ENCODE measurements at regions of chr2 and their contacts with region 1.

Region 1: DNA sequence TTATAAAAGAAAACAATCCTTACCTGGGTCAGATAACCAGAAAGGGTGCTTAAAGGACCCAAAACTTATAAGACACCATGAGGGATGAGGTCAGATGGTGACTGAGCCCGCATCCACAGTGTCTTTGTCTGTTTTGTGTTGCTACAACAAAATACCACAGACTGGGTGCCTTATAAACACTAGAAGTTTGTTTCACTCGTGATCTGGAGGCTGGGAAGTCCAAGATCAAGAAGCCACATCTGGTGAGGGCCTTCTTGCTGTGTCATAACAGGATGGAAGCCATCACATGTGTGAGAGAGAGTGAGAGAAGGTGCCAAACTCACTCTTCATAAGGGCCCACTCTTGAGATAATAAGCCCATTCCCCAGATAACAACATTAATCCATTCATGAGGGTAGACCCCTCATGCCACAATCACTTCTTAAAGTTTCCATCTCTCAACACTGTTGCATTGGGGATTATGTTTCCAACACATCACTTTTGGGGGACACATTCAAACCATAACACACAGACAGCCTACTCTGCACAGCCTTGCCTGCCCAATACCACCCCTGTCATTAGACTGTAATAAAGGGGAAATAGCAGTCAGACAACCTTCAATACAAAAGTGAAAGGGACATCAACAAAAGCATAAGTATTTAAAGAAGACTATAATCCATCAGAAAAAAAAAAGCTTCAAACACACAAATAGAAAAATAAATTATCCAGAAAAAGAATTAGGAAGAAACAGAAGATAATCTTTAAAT is 249.8 kb downstream of the ANAPC1 start:
- DNase-seq: peak; percentile 80
- H3K4me3 Mint-ChIP-seq: peak overlapping the region; percentile 62
- H3K27ac Mint-ChIP-seq: peak overlapping the region; percentile 88
- H3K4me1 Mint-ChIP-seq: peaks cover 27% of the 10 kb centered on the region
- H3K27me3 Mint-ChIP-seq: peaks cover 11% of the 10 kb centered on the region

Region 2: DNA sequence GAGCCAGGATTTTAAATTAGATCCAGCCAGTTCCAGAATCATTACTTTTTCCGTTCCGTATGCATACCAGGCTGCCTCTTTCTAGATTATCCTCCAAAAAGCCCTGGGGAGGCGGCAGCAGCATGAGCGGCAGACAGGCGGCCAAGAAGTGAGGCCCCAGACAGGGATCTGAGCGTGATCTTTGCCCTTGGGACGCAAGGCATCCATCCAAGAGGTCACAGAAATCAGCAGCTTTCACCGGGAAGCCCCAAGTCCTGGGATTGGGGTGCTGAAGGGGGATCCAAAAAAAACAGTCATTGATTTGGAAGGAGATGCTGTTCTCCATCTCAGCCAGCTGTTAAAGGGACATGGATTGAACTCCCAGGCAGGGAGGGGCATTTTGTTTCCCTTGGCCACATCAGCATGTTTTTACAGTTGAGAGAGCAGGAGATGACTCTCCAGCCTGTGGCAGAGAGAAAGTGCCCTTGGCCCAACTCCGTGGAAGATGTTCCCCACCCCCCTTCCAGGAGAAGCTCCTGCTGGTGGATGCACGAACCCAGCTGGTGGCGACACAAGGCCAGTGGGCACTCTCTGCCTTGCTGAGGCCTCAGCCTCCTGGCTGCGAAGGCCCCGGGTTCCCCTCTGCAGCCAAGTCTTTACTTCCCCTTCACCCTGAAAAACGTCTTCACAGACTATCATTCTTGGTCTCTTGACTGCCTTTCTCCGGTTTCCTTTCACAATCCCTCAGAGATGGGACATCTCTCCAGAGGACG is 15.8 kb before region 1 on chr2:
- intact Hi-C with region 1: no loop called
- DNase-seq: no peak
- H3K4me3 Mint-ChIP-seq: no peak overlapping the region
- H3K27ac Mint-ChIP-seq: no peak overlapping the region
- H3K4me1 Mint-ChIP-seq: peaks cover 8% of the 10 kb centered on the region
- H3K27me3 Mint-ChIP-seq: peaks cover 11% of the 10 kb centered on the region

Region 3: GRCh38 chr2:111698743-111699554 is 64.7 kb after region 1 on chr2:
- intact Hi-C with region 1: loop called (anchors 2 kb)
- DNase-seq: peak; percentile 89
- H3K4me3 Mint-ChIP-seq: peak overlapping the region; percentile 74
- H3K27ac Mint-ChIP-seq: peak overlapping the region; percentile 94
- H3K4me1 Mint-ChIP-seq: peaks cover 44% of the 10 kb centered on the region
- H3K27me3 Mint-ChIP-seq: peaks cover 14% of the 10 kb centered on the region

Region 4: DNA sequence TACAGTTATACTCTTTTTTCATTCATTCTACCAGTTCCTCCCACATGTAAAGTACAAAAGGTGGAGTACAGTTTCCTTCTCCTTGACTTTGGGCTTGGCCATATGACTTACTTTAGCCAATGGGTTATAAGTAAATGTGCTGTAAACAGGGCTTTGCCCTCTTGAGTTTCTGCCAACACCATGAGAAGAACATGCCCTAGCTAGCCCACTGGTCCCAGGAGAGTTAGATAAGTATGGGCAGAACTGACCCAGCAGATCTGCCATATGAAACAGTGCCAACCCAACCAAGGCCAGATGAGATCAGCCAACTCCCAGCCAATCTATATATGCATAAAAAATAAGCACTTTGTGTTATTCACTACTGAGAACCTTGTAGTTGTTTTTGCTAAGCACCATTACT is 595.1 kb after region 1 on chr2:
- intact Hi-C with region 1: no loop called
- DNase-seq: no peak
- H3K4me3 Mint-ChIP-seq: no peak overlapping the region
- H3K27ac Mint-ChIP-seq: no peak overlapping the region
- H3K4me1 Mint-ChIP-seq: peaks cover 3% of the 10 kb centered on the region
- H3K27me3 Mint-ChIP-seq: no peaks in the 10 kb centered on the region